Heart left ventricle (tissue), 16 donors: ENCODE measurements at regions of chr12 and their contacts with region 1.

Region 1: DNA sequence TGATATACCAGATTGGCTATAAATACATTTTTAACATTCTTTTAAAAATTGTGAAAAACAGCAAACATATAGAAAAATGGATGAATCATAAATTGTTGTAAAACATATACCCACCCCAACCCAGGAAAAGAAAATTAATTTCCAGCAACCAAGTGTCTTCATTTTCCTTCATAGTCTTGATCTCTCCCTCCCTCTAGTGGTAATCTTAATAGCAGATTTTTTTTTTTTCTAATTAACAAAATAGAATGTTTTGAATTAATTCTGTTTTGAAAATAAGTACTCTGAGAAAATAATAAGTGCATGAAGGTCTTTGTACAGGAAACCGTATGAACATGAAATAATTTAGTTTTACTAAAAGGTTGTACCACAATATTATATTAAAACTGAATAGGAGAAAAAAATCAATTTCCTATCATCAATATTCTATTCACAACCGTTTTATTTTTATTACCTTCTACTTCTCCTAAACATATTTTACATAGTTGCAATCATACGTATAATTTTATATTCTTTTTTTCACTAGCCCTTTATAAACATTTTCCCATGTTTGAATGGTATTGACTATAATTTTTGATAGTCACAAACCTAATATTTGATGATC is 7.0 kb downstream of the ETNK1 start:
- DNase-seq: no peak
- ATAC-seq: no peak
- H3K4me3 ChIP-seq: no peak overlapping the region
- H3K27ac ChIP-seq: no peak overlapping the region
- H3K4me1 ChIP-seq: peaks cover 0 to 50% (median 31%) of the 10 kb centered on the region in 12 donors
- H3K27me3 ChIP-seq: no peaks in the 10 kb centered on the region
- CTCF ChIP-seq: peak; percentile 45 to 75 (median 60)
- POLR2A ChIP-seq: no peak

Region 2: DNA sequence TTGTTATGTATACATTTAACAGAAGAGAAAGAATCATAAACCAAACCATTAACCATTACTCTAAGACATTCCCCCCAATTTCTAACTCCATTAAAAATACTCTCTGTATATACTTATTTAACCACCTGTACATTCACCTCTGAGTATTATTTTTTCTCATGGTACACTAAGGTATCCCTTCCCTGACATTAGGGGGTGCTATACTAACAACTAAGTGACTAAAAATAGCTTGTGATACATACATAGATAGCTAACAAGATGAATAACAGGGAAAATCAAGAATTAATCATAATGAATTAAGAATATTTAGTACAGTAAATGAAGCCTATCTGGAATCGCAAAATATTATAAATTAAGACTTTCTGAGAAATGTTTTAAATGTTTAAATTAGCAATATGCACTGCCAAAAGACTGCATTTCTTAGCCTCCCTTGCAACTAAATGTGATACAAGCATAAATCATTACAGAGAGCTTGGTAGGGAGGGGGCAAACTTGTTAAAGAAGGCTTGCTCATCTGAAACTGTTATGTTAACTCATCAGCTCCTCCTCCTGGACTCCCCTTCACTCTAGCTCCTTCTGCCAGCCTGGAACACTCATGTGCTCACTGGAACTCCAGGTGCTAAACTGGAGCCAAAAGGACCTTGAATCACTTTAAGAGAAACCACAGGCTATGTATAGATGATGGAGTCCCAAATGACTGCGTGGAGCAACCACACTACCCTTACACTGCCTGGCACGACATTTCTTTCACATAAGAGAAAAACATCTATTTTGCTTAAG is 102.5 kb before region 1 on chr12:
- intact Hi-C with region 1: loop called in 1 of 10 experiments (anchors 5 kb)
- DNase-seq: no peak
- ATAC-seq: peak in 2 of 4 donors; percentile 51 to 55
- H3K4me3 ChIP-seq: no peak overlapping the region
- H3K27ac ChIP-seq: no peak overlapping the region
- H3K4me1 ChIP-seq: peaks cover 0 to 10% (median 0%) of the 10 kb centered on the region in 12 donors
- H3K27me3 ChIP-seq: no peaks in the 10 kb centered on the region
- CTCF ChIP-seq: peak; percentile 11 to 51 (median 41)
- POLR2A ChIP-seq: no peak

Region 3: GRCh38 chr12:22573181-22573580 is 58.8 kb before region 1 on chr12:
- intact Hi-C with region 1: no loop called
- DNase-seq: no peak
- ATAC-seq: no peak
- H3K4me3 ChIP-seq: no peak overlapping the region
- H3K27ac ChIP-seq: no peak overlapping the region
- H3K4me1 ChIP-seq: no peaks in the 10 kb centered on the region
- H3K27me3 ChIP-seq: no peaks in the 10 kb centered on the region
- CTCF ChIP-seq: no peak
- POLR2A ChIP-seq: no peak